Activated T-helper 2 cell treated with anti-CD3 and anti-CD28 coated beads, Interferon-gamma antibody, Interleukin-2, Interleukin-4, amounts not matched to agents 10 μg/mL and 5 μg/mL and 100 μg/mL, durations not matched to agents 14 hours and 24 hours and 36 hours (primary cell): ENCODE measurements at regions of chr10 and their contacts with region 1.

Region 1: GRCh38 chr10:102114861-102115618 is 5.1 kb downstream of the LDB1 start:
- DNase-seq: peak; percentile 74
- H3K4me3 Mint-ChIP-seq: peak overlapping the region; percentile 84
- H3K27ac Mint-ChIP-seq: peak overlapping the region; percentile 92
- H3K4me1 Mint-ChIP-seq: peaks cover 59% of the 10 kb centered on the region
- H3K27me3 Mint-ChIP-seq: no peaks in the 10 kb centered on the region

Region 2: GRCh38 chr10:101693978-101694673 is 420.9 kb before region 1 on chr10:
- intact Hi-C with region 1: loop called (anchors 10 kb)
- DNase-seq: peak; percentile 72
- H3K4me3 Mint-ChIP-seq: peak overlapping the region; percentile 95
- H3K27ac Mint-ChIP-seq: peak overlapping the region; percentile 96
- H3K4me1 Mint-ChIP-seq: peaks cover 16% of the 10 kb centered on the region
- H3K27me3 Mint-ChIP-seq: no peaks in the 10 kb centered on the region

Region 3: DNA sequence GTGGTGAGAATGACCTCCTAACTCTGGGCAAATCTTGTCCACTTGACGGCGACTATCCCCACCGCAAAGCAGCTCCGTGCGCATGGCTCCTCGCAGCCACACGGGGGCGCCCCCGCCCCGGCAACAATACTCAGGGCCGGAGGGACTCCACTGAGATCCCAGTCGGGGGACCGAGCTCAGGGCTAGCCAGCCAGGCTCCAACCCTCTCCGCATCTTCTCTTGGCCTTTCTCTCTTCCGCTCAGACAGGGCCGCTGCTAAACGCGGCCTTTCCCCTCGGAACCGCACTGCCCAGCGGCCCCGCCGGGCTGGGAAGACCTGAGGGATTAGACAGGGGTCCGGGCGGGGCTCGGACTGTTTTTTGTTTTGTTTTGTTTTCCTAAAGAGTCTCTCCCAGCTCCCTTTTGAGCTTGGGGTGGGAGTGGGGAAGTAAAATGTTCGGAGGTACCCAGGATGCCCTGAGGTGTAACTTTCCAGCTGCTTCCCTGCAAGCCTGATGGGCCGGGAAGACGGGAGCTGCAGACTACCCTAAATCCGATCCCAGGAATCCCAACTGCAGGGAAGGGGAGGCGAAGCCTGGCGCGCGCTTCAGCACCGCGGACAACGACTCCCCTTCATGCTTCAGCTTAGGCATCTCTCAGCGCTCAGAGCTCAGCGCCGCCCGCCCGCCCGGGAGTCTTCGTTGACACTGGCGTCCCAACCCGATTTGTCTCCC is 274.1 kb before region 1 on chr10:
- intact Hi-C with region 1: loop called (anchors 2 kb)
- DNase-seq: peak; percentile 70
- H3K4me3 Mint-ChIP-seq: peak overlapping the region; percentile 88
- H3K27ac Mint-ChIP-seq: peak overlapping the region; percentile 77
- H3K4me1 Mint-ChIP-seq: peaks cover 36% of the 10 kb centered on the region
- H3K27me3 Mint-ChIP-seq: peaks cover 23% of the 10 kb centered on the region

Region 4: GRCh38 chr10:102064868-102065560 is 50.0 kb before region 1 on chr10 and contains the start of gene HPS6:
- intact Hi-C with region 1: loop called (anchors 2 kb)
- DNase-seq: peak; percentile 88
- H3K4me3 Mint-ChIP-seq: peak within 1 kb of the TSS; percentile 86
- H3K27ac Mint-ChIP-seq: peak within 1 kb of the TSS; percentile 89
- H3K4me1 Mint-ChIP-seq: peaks cover 21% of the 10 kb centered on the region
- H3K27me3 Mint-ChIP-seq: no peaks in the 10 kb centered on the region
- total RNA-seq, gene HPS6: 25.4 and 25.5 TPM in 2 replicates

Region 5: DNA sequence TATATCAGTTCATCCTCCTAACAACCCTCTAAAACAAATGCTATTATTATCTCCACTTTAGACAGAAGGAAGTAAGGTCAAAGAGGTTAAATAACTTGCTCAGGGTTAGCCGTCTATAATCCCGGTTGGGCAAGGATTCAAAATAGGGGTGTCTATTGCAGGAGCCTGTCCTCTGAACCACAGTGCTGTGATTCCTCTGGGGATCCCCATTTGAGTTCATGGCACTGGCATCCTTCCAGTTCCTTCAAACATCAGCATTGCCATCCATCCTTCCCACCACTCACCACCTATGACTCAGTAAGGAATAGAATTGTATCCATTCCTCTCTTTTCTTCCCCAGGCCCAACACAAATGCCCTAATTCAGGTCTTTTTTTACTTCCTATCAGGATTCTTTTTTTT is 24.3 kb before region 1 on chr10:
- intact Hi-C with region 1: no loop called
- DNase-seq: no peak
- H3K4me3 Mint-ChIP-seq: no peak overlapping the region
- H3K27ac Mint-ChIP-seq: no peak overlapping the region
- H3K4me1 Mint-ChIP-seq: no peaks in the 10 kb centered on the region
- H3K27me3 Mint-ChIP-seq: no peaks in the 10 kb centered on the region

Region 6: GRCh38 chr10:102132563-102133372 is 17.7 kb after region 1 on chr10 and contains the start of gene PPRC1:
- intact Hi-C with region 1: loop called (anchors 1 kb)
- DNase-seq: peak; percentile 98
- H3K4me3 Mint-ChIP-seq: peak within 1 kb of the TSS; percentile 95
- H3K27ac Mint-ChIP-seq: peak within 1 kb of the TSS; percentile 98
- H3K4me1 Mint-ChIP-seq: peaks cover 26% of the 10 kb centered on the region
- H3K27me3 Mint-ChIP-seq: no peaks in the 10 kb centered on the region
- total RNA-seq, gene PPRC1: 91.3 and 94.1 TPM in 2 replicates